Esophagus muscularis mucosa (tissue), 4 donors: ENCODE measurements at regions of chr13 and their contacts with region 1.

Region 1: GRCh38 chr13:20940083-20940880 is 37.7 kb upstream of the XPO4 start:
- DNase-seq: no peak
- H3K4me3 ChIP-seq: no peak overlapping the region
- H3K27ac ChIP-seq: peak overlapping the region in 1 of 4 donors; percentile 14
- H3K4me1 ChIP-seq: peaks cover 8 to 17% (median 12%) of the 10 kb centered on the region in 4 donors
- H3K27me3 ChIP-seq: no peaks in the 10 kb centered on the region
- CTCF ChIP-seq: no peak
- EP300 ChIP-seq: no peak
- POLR2A ChIP-seq: no peak

Region 2: GRCh38 chr13:21069561-21070004 is 129.3 kb after region 1 on chr13:
- intact Hi-C with region 1: loop called (anchors 5 kb)
- DNase-seq: peak; percentile 57
- H3K4me3 ChIP-seq: no peak overlapping the region
- H3K27ac ChIP-seq: peak overlapping the region; percentile 48 to 79 (median 68)
- H3K4me1 ChIP-seq: peaks cover 0 to 36% (median 34%) of the 10 kb centered on the region in 4 donors
- H3K27me3 ChIP-seq: no peaks in the 10 kb centered on the region
- CTCF ChIP-seq: no peak
- EP300 ChIP-seq: no peak
- POLR2A ChIP-seq: no peak

Region 3: DNA sequence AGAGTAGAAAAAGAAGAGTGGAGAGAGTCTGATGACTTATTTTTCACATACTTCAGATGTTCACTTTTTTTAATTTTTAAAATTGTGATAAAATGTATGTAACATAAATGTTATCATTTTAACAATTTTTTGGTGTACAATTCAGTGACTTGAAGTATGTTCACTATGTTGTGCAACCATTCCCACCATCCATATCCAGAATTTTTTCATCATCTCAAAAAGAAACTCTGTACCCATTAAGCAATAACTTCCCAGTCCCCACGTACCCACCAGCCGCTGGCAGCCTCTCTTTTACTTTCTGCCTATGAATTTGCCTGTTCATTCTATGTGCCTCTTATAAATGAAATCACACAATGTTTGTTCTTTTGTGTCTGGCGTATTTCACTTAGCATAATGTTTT is 192.8 kb after region 1 on chr13:
- intact Hi-C with region 1: loop called (anchors 2 kb)
- DNase-seq: no peak
- H3K4me3 ChIP-seq: no peak overlapping the region
- H3K27ac ChIP-seq: no peak overlapping the region
- H3K4me1 ChIP-seq: no peaks in the 10 kb centered on the region
- H3K27me3 ChIP-seq: peaks cover 0 to 12% (median 0%) of the 10 kb centered on the region in 4 donors
- CTCF ChIP-seq: no peak
- EP300 ChIP-seq: no peak
- POLR2A ChIP-seq: no peak

Region 4: DNA sequence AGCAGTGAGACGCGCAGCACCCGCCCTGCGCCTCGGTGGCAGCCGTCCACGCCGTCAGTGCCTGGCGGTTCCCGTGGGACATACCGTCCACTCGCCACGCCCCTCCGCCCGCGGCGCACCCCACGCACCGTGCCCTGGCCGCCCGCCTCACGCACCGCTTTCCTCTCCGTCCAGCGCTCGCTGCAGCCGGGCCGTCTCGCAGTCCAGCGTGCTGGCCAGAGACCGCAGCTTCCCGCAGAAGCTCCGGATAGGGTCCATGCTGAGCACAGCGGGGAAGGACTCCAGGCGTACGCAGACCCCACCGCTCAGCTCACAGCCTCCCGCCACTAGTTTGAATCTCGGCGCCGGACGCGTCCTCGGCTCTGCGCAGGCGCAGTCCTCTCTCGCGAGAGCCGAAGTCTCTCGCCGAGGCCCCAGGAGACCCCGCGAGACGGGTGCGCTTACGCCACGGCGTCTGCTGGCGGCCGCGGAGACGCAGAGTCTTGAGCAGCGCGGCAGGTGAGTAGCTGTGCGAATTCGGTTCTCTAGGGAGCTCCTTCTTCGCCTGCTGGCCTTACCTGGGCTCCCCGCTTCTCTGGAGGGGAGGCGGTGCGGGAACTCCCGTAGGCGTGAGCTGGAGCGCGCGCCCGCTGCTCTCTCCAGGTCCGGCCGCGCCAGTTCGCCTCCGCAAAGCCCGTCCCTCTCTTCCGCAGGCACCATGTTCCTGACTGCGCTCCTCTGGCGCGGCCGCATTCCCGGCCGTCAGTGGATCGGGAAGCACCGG is 236.1 kb after region 1 on chr13 and contains the starts of genes MRPL57 and SKA3:
- intact Hi-C with region 1: loop called (anchors 5 kb)
- DNase-seq: peak; percentile 94
- H3K4me3 ChIP-seq: peak within 1 kb of the TSS; percentile 76 to 91 (median 89)
- H3K27ac ChIP-seq: peak within 1 kb of the TSS; percentile 94 to 98 (median 95)
- H3K4me1 ChIP-seq: peaks cover 11 to 27% (median 21%) of the 10 kb centered on the region in 4 donors
- H3K27me3 ChIP-seq: no peaks in the 10 kb centered on the region
- CTCF ChIP-seq: peak in 2 of 3 experiments; percentile 34
- EP300 ChIP-seq: no peak
- POLR2A ChIP-seq: peak; percentile 42
- total RNA-seq, gene MRPL57: 28.0 to 48.2 (median 32.1) TPM
- total RNA-seq, gene SKA3: 0.23 to 0.83 (median 0.66) TPM in 3 of 4 donors, not detected in the other

Region 5: GRCh38 chr13:21476893-21477472 is 536.7 kb after region 1 on chr13:
- intact Hi-C with region 1: loop called (anchors 2 kb)
- DNase-seq: no peak
- H3K4me3 ChIP-seq: peak overlapping the region; percentile 41 to 47 (median 44)
- H3K27ac ChIP-seq: peak overlapping the region in 1 of 4 donors; percentile 45
- H3K4me1 ChIP-seq: peaks cover 0 to 20% (median 17%) of the 10 kb centered on the region in 4 donors
- H3K27me3 ChIP-seq: no peaks in the 10 kb centered on the region
- CTCF ChIP-seq: peak; percentile 76 to 92 (median 84)
- EP300 ChIP-seq: no peak
- POLR2A ChIP-seq: no peak